ENCODE measurements at regions of chr20 and their contacts with region 1.

Region 1: DNA sequence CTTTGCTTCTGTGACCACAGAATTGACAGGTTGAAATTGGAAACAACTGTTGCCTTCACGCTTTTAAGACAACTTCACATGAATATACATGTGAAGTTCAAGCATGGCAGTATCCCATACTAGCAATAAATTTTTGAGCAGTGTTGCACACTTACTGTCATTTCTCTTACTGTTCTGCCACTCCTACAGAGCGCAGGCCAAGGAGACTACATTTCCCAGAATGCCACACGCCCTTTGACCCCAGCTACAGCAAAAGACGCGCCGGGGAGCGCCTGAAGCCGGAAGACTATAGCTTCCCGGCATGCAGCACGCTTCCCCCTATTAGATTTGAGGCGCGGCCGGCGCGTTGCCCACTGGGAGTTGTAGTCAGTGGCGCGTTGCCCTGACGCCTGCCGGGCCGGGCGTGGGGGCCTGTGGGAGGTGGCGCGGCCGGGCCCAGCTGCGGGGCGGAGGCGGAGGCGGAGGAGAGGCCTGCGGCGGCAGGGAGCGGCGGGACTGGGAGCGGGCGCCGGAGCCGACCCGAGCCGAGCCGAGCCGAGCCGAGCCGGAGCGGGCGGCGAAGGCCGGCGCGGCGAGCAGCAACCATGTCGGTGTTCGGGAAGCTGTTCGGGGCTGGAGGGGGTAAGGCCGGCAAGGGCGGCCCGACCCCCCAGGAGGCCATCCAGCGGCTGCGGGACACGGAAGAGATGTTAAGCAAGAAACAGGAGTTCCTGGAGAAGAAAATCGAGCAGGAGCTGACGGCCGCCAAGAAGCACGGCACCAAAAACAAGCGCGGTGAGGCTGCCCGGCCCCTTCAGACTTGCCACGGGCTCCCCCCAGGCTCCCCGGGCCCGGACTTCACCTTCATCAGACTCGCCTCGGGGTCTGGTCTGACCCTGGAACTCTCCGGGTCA is at the start of gene CHMP4B:
- DNase-seq: peak; percentile 97
- ATAC-seq: peak; percentile 95
- H3K4me3 Mint-ChIP-seq: peak within 1 kb of the TSS; percentile 98
- H3K27ac Mint-ChIP-seq: peak within 1 kb of the TSS; percentile 92
- H3K4me1 Mint-ChIP-seq: peaks cover 45% of the 10 kb centered on the region
- H3K27me3 Mint-ChIP-seq: no peaks in the 10 kb centered on the region
- CTCF ChIP-seq: no peak
- total RNA-seq, gene CHMP4B: 116 and 121 TPM in 2 replicates

Region 2: DNA sequence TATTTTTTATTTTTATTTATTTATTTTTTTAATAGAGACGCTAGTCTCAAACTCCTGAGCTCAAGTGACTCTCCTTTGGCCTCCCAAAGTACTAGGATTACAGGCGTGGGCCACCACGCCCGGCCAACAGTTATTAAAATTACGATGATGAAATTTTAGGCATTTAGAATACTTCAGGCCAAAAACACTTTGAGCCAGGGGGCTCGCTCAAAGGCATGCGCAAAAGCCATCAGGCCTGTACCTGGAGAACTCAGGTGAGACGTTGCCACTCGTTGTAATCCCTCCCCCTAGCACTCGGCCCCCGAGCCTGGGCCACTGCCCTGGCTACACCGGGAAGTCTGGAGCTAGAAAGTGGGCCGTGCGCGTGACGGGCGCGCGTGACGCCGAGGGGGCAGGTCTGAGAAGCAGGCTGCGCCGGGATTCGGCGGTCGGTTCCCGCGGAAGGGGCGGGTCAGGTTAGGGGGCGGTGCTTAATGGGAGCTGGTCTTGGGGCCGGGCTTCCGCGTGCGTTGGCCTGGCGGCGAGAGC is 321.6 kb before region 1 on chr20:
- CTCF ChIA-PET with region 1: no interaction called
- POLR2A ChIA-PET with region 1: interaction called, 4 read pairs
- intact Hi-C with region 1: loop called (anchors 1 kb)
- DNase-seq: peak; percentile 99
- ATAC-seq: peak; percentile 96
- H3K4me3 Mint-ChIP-seq: peak overlapping the region; percentile 84
- H3K27ac Mint-ChIP-seq: peak overlapping the region; percentile 88
- H3K4me1 Mint-ChIP-seq: peaks cover 15% of the 10 kb centered on the region
- H3K27me3 Mint-ChIP-seq: no peaks in the 10 kb centered on the region
- CTCF ChIP-seq: no peak

Region 3: GRCh38 chr20:33719989-33720709 is 91.0 kb before region 1 on chr20 and contains the start of gene PXMP4:
- CTCF ChIA-PET with region 1: no interaction called
- POLR2A ChIA-PET with region 1: interaction called, 8 read pairs
- intact Hi-C with region 1: loop called (anchors 1 kb)
- DNase-seq: peak; percentile 67
- ATAC-seq: peak; percentile 97
- H3K4me3 Mint-ChIP-seq: peak within 1 kb of the TSS; percentile 93
- H3K27ac Mint-ChIP-seq: peak within 1 kb of the TSS; percentile 91
- H3K4me1 Mint-ChIP-seq: peaks cover 27% of the 10 kb centered on the region
- H3K27me3 Mint-ChIP-seq: no peaks in the 10 kb centered on the region
- CTCF ChIP-seq: no peak
- total RNA-seq, gene PXMP4: 6.8 and 7.7 TPM in 2 replicates

Region 4: GRCh38 chr20:33781133-33781532 is 30.0 kb before region 1 on chr20:
- CTCF ChIA-PET with region 1: interaction called, 3 read pairs
- POLR2A ChIA-PET with region 1: interaction called, 40 read pairs
- intact Hi-C with region 1: loop called (anchors 1 kb)
- DNase-seq: no peak
- ATAC-seq: no peak
- H3K4me3 Mint-ChIP-seq: peak overlapping the region; percentile 12
- H3K27ac Mint-ChIP-seq: peak overlapping the region; percentile 95
- H3K4me1 Mint-ChIP-seq: peaks cover 86% of the 10 kb centered on the region
- H3K27me3 Mint-ChIP-seq: no peaks in the 10 kb centered on the region
- CTCF ChIP-seq: no peak

Region 5: GRCh38 chr20:33843854-33844253 is 32.7 kb after region 1 on chr20:
- CTCF ChIA-PET with region 1: no interaction called
- POLR2A ChIA-PET with region 1: no interaction called
- intact Hi-C with region 1: loop called (anchors 1 kb)
- DNase-seq: peak; percentile 22
- ATAC-seq: peak; percentile 97
- H3K4me3 Mint-ChIP-seq: peak overlapping the region; percentile 53
- H3K27ac Mint-ChIP-seq: peak overlapping the region; percentile 74
- H3K4me1 Mint-ChIP-seq: peaks cover 87% of the 10 kb centered on the region
- H3K27me3 Mint-ChIP-seq: no peaks in the 10 kb centered on the region
- CTCF ChIP-seq: no peak

Region 6: DNA sequence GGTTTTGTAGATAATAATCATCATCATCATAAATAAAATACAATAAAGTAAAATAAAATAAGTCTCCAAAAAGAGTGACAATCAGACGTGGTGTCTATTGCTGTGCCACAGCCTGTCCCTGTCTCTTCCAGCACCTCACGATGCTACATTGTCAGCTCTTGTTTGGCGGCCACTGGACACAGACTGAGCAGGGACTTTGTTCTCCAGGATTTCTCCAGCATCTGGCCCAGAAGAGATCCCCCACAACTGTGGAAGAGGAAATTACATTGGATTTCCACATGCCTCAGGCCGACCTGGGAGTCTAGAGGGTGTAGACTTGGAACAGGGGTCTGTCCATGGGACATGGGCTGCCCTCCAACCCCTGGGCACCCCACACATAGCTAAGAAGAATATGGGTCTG is 143.4 kb after region 1 on chr20:
- CTCF ChIA-PET with region 1: no interaction called
- POLR2A ChIA-PET with region 1: no interaction called
- intact Hi-C with region 1: no loop called
- DNase-seq: no peak
- ATAC-seq: no peak
- H3K4me3 Mint-ChIP-seq: no peak overlapping the region
- H3K27ac Mint-ChIP-seq: no peak overlapping the region
- H3K4me1 Mint-ChIP-seq: no peaks in the 10 kb centered on the region
- H3K27me3 Mint-ChIP-seq: peaks cover 15% of the 10 kb centered on the region
- CTCF ChIP-seq: no peak

Region 7: GRCh38 chr20:34111702-34112599 is 300.8 kb after region 1 on chr20 and contains the start of gene EIF2S2:
- CTCF ChIA-PET with region 1: no interaction called
- POLR2A ChIA-PET with region 1: interaction called, 17 read pairs
- intact Hi-C with region 1: loop called (anchors 1 kb)
- DNase-seq: peak; percentile 87
- ATAC-seq: peak; percentile 84
- H3K4me3 Mint-ChIP-seq: peak within 1 kb of the TSS; percentile 96
- H3K27ac Mint-ChIP-seq: peak within 1 kb of the TSS; percentile 98
- H3K4me1 Mint-ChIP-seq: peaks cover 49% of the 10 kb centered on the region
- H3K27me3 Mint-ChIP-seq: no peaks in the 10 kb centered on the region
- CTCF ChIP-seq: no peak
- total RNA-seq, gene EIF2S2: 58.3 and 62.2 TPM in 2 replicates